ENCODE measurements at regions of chr3 and their contacts with region 1.

Region 1: DNA sequence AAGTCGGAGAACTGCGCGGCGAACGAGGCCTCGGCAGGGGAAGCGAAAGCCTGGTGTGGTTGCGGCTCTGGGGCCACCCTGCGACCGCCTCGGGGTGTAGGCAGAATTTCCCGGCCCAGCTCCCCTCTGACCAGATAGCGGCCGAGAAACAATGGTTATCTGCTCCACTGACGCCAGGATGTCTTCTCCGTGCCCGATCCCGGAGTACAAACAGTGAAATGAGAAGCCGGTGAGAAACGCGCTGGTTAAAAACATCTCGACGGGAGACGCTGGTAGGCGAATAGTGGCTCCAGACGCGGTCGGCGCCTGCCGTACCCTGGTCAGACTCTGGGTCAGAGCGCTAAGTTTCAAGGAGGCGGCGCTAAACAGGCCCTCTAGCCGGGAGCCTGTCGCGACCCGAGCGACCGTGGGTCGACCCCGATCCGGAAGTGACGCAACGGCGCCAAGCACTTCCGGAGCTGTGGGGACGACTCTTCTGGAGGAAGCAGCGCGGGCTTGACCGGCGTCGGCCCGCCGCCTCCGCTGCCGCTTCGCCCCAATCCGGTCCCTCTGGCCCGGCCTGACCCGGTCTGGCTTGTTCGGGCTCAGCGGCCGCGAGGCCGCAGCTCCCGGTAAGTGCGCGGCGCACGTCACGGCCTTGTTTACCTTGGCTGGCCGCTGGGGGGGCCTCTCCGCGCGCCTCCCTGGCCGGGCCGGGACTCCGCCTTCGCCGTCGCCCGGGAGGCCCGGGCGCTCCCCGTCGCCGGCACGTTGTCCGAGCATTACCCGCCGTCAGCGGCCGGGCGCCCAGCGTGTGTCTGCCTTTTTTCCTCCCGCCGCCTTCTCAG is at the start of gene ARIH2:
- DNase-seq: peak; percentile 91
- ATAC-seq: peak; percentile 85
- H3K4me3 Mint-ChIP-seq: peak within 1 kb of the TSS; percentile 99
- H3K27ac Mint-ChIP-seq: peak within 1 kb of the TSS; percentile 98
- H3K4me1 Mint-ChIP-seq: peaks cover 32% of the 10 kb centered on the region
- H3K27me3 Mint-ChIP-seq: no peaks in the 10 kb centered on the region
- CTCF ChIP-seq: no peak
- total RNA-seq, gene ARIH2: 96.6 and 112 TPM in 2 replicates

Region 2: GRCh38 chr3:48716982-48717746 is 201.4 kb before region 1 on chr3 and contains the start of gene IP6K2:
- CTCF ChIA-PET with region 1: no interaction called
- POLR2A ChIA-PET with region 1: interaction called, 13 read pairs
- intact Hi-C with region 1: loop called (anchors 2 kb)
- DNase-seq: peak; percentile 98
- ATAC-seq: peak; percentile 99
- H3K4me3 Mint-ChIP-seq: peak within 1 kb of the TSS; percentile 98
- H3K27ac Mint-ChIP-seq: peak within 1 kb of the TSS; percentile 94
- H3K4me1 Mint-ChIP-seq: peaks cover 37% of the 10 kb centered on the region
- H3K27me3 Mint-ChIP-seq: peaks cover 4% of the 10 kb centered on the region
- CTCF ChIP-seq: no peak
- total RNA-seq, gene IP6K2: 83.2 and 94.1 TPM in 2 replicates

Region 3: GRCh38 chr3:48898383-48899234 is 20.0 kb before region 1 on chr3 and contains the start of gene SLC25A20:
- CTCF ChIA-PET with region 1: interaction called, 5 read pairs
- POLR2A ChIA-PET with region 1: interaction called, 36 read pairs
- intact Hi-C with region 1: loop called (anchors 1 kb)
- DNase-seq: peak; percentile 88
- ATAC-seq: peak; percentile 99
- H3K4me3 Mint-ChIP-seq: peak within 1 kb of the TSS; percentile 92
- H3K27ac Mint-ChIP-seq: peak within 1 kb of the TSS; percentile 83
- H3K4me1 Mint-ChIP-seq: peaks cover 38% of the 10 kb centered on the region
- H3K27me3 Mint-ChIP-seq: no peaks in the 10 kb centered on the region
- CTCF ChIP-seq: no peak
- total RNA-seq, gene SLC25A20: 9.9 and 11.0 TPM in 2 replicates